PC-9 (cell line): ENCODE measurements at regions of chr1 and their contacts with region 1.

Region 1: GRCh38 chr1:33181921-33182341 is at the start of gene TRIM62:
- DNase-seq: peak; percentile 54 to 77
- H3K4me3 ChIP-seq: peak within 1 kb of the TSS; percentile 87
- H3K27ac ChIP-seq: no peak within 1 kb of the TSS
- H3K4me1 ChIP-seq: peaks cover 4% of the 10 kb centered on the region; the same call in 1 of the 2 replicates
- H3K27me3 ChIP-seq: no peaks in the 10 kb centered on the region
- CTCF ChIP-seq: no peak
- total RNA-seq, gene TRIM62: 9.9 and 14.3 TPM in 2 replicates

Region 2: GRCh38 chr1:32992489-32993323 is 189.2 kb before region 1 on chr1:
- CTCF ChIA-PET with region 1: interaction called, 17 read pairs
- POLR2A ChIA-PET with region 1: no interaction called
- intact Hi-C with region 1: no loop called
- DNase-seq: peak; percentile 91 to 96
- H3K4me3 ChIP-seq: peak overlapping the region; percentile 15; the same call in 1 of the 2 replicates
- H3K27ac ChIP-seq: peak overlapping the region; percentile 93
- H3K4me1 ChIP-seq: peaks cover 62% of the 10 kb centered on the region
- H3K27me3 ChIP-seq: no peaks in the 10 kb centered on the region
- CTCF ChIP-seq: no peak